OCI-LY7 (cell line): ENCODE measurements at regions of chr1 and their contacts with region 1.

Region 1: DNA sequence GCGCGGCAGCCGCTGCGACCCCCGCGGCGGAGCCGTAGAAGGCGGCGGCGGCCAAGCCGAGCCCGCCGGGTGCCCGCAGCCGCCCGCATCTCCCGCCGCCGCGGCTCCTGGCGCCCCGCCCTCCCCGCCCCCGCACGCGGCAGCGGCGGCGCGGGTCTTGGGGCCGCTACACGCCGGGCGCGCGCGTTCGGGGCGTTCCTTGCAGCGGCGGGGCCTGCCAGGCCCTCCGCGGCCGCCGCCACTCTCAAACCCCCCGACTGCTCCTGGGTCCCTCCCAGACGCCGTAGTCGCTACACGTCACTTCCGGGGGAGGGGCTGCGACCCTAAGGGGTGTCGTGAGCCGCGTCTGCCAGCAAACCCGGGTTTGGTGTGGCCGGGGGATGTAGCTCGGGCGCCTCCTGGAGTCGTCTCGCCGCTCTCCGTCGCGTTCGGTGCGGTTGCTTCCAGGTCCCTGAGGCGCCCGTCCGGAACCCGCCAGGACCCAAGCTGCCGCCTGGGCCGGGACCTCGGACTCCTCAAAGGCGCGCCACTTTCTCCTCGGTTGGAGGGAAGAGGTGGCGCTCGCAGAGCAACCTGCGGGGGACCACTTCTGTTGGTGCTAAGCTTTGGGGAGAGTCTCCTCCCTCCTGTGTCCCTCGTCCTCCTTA is at the start of gene ELK4:
- DNase-seq: peak; percentile 99
- H3K4me3 ChIP-seq: peak within 1 kb of the TSS; percentile 92
- H3K27ac ChIP-seq: peak within 1 kb of the TSS; percentile 93
- H3K4me1 ChIP-seq: peaks cover 35% of the 10 kb centered on the region
- CTCF ChIP-seq: peak; percentile 78
- total RNA-seq, gene ELK4: 26.4 and 29.1 TPM in 2 replicates

Region 2: DNA sequence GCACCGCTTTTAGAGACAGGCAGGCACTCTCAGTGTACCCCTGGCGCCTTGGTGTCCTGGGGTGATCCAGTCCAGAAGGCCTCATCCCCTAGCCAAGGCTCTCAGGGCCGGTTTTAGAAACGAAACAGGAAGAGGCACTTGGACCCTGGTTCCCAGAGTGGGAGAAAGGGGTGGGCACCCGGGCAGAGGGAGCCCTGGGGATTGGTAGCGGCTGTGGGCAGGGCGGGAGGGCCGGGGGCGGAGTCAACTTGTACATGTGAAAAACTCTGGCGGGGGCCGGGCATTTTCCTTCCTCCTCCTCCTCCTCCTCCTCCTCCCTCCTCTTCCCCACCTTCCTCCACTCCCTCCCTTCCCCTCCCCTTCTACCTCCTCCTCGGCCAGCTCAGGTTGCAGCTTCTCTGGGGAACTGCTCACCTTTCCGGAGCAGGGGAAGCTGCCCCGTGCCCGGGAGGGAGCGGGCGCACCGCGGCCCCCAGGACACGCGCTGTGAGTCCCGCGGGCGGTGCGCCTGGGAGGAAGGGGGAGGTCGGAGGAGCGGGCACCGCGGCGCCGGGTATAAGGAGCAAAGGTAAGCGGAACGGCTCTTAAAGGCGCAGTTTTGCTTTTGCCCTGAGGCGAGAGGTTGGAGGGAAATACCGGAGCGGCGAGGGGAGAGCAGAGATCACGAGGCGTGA is 127.4 kb before region 1 on chr1 and contains the start of gene CDK18:
- CTCF ChIA-PET with region 1: no interaction called
- POLR2A ChIA-PET with region 1: no interaction called
- intact Hi-C with region 1: loop called (anchors 1 kb)
- DNase-seq: peak; percentile 80
- H3K4me3 ChIP-seq: peak within 1 kb of the TSS; percentile 72
- H3K27ac ChIP-seq: peak within 1 kb of the TSS; percentile 12
- H3K4me1 ChIP-seq: peaks cover 24% of the 10 kb centered on the region
- CTCF ChIP-seq: no peak
- total RNA-seq, gene CDK18: 10.1 and 10.9 TPM in 2 replicates

Region 3: DNA sequence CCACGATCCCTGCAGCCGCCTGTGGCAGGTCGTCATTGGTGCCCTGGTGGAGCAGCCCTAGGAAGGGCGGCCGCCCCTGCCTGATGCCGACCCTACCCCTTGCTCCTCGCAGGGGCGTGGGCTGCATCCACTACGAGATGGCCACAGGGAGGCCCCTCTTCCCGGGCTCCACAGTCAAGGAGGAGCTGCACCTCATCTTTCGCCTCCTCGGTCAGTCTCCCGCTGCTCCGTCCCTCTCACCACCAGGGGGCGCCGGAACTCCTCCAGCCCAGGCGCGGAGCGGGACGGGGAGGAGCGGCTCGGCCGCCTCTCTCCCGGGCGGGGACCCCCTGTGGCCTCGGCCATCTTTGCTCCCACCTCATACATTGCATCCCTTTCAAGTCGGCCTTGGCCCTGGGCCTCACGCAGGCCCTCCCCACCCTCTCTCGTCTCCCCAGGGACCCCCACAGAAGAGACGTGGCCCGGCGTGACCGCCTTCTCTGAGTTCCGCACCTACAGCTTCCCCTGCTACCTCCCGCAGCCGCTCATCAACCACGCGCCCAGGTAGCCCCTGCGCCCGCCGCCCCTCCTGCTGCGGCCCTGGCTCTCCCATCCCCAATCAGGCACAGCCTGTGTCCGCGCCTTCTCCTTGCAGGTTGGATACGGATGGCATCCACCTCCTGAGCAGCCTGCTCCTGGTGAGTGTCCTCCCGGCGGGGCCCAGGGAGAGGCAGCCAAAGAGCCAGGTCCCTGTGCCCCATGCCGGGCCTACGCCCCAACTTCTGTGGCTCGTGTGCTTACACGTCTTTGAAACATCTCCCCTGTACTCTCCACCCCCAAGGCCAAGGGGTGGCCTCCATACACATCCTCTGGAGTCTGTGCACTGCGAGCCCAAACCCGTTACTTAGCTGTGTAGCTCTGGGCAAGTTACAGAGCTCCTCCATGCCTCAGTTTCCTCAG is 102.7 kb before region 1 on chr1:
- CTCF ChIA-PET with region 1: interaction called, 3 read pairs
- POLR2A ChIA-PET with region 1: interaction called, 5 read pairs
- intact Hi-C with region 1: loop called (anchors 2 kb)
- DNase-seq: peak; percentile 82
- H3K4me3 ChIP-seq: peak overlapping the region; percentile 50
- H3K27ac ChIP-seq: no peak overlapping the region
- H3K4me1 ChIP-seq: no peaks in the 10 kb centered on the region
- CTCF ChIP-seq: peak; percentile 87

Region 4: DNA sequence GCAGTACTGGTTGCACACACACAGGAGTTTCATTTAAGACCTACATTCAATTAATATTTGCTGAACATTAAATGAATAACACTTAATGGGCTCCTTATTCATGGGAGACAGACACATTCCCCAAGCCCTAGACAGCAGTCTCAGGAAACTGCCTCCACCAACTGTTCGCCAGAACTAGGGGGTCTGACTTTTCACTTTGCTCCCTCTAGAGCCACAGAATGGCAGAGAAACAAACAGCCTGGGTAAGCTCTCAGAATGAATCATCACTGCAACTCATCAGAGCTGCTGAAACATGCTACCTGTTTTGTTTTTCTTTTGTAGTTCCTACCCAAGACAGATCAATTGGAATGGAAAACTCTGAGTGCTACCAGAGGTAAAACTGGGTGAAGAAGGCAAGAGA is 31.8 kb before region 1 on chr1:
- CTCF ChIA-PET with region 1: interaction called, 5 read pairs
- POLR2A ChIA-PET with region 1: interaction called, 183 read pairs
- intact Hi-C with region 1: no loop called
- DNase-seq: no peak
- H3K4me3 ChIP-seq: no peak overlapping the region
- H3K27ac ChIP-seq: no peak overlapping the region
- H3K4me1 ChIP-seq: peaks cover 40% of the 10 kb centered on the region
- CTCF ChIP-seq: no peak

Region 5: DNA sequence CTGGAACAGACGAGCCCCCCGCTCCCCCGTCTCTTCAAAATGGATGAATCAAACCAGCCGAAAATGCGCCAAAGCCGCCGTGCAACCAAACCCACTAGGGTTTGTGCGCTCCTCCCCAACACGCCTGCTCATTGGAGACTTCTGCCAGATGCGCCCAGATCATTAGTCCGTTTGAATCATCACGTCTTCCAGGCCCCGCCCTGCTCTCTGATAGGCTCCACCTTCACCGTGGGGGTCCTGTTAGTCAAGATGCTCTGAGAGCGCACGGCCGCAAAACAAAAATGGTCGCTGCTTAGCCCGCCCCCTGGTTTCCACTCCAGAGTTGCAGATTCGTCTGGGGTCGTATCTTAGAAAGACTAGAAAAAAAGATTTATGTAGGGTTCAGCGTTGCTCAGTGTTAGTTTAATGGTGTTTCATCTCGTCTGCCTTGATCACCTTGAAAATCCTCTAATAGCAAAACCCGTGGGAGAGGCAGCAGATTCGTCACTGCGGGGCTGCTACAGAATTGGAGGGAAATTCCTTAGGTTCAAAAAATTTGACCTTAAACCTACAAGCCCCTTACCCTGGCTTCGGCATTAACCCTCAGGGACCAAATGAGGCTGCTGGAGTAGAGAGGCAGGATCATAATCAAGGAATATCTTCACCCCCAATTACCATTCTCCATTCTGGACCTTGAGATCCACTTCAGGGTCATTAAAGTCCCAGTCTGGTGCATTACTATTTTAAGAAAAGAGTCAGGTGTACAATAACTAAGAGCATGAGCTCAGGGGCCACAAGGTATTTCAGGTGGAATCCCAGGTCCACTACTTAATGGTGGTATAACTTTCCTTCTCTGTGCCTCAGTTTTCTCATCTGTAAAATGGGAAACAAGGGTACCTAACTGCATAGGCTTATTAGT is 118.5 kb after region 1 on chr1 and contains the start of gene NUCKS1:
- CTCF ChIA-PET with region 1: no interaction called
- POLR2A ChIA-PET with region 1: no interaction called
- intact Hi-C with region 1: no loop called
- DNase-seq: peak; percentile 100
- H3K4me3 ChIP-seq: peak within 1 kb of the TSS; percentile 95
- H3K27ac ChIP-seq: peak within 1 kb of the TSS; percentile 86
- H3K4me1 ChIP-seq: peaks cover 35% of the 10 kb centered on the region
- CTCF ChIP-seq: no peak
- total RNA-seq, gene NUCKS1: 152 and 238 TPM in 2 replicates

Region 6: GRCh38 chr1:205939690-205940330 is 308.0 kb after region 1 on chr1:
- CTCF ChIA-PET with region 1: no interaction called
- POLR2A ChIA-PET with region 1: no interaction called
- intact Hi-C with region 1: no loop called
- DNase-seq: peak; percentile 33
- H3K4me3 ChIP-seq: no peak overlapping the region
- H3K27ac ChIP-seq: no peak overlapping the region
- H3K4me1 ChIP-seq: no peaks in the 10 kb centered on the region
- CTCF ChIP-seq: peak; percentile 48